ENCODE measurements at regions of chr2 and their contacts with region 1.

Region 1: DNA sequence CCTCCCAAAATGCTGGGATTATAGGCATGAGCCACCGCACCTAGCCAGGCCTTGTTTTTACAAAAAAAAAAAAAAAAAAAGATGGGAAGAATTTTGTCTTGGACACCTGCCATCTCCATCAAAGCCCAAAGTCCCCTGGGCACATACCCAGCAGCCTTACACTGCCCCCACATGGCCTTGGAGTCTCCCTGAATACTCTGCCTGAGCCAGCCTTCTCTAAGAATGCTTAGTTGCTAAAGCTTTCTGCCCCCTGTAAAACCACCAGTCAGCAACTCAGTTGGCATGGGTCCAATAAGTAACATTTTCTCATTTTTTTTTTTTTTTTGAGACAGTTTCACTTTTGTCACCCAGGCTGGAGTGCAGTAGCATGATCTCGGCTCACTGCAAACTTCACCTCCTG is 40.6 kb downstream of the SPC25 start:
- DNase-seq: peak; percentile 79 to 82
- H3K4me3 ChIP-seq: no peak overlapping the region
- H3K27ac ChIP-seq: peak overlapping the region; percentile 13 to 71 (median 24)
- H3K4me1 ChIP-seq: peaks cover 5 to 8% of the 10 kb centered on the region in 2 donors
- H3K27me3 ChIP-seq: no peaks in the 10 kb centered on the region
- CTCF ChIP-seq: peak in 4 of 6 experiments; percentile 61 to 76 (median 68)
- POLR2A ChIP-seq: no peak

Region 2: GRCh38 chr2:168814939-168815907 is 34.4 kb before region 1 on chr2:
- intact Hi-C with region 1: loop called (anchors 5 kb)
- DNase-seq: peak; percentile 68
- H3K4me3 ChIP-seq: no peak overlapping the region
- H3K27ac ChIP-seq: peak overlapping the region; percentile 80 to 92 (median 82)
- H3K4me1 ChIP-seq: peaks cover 46 to 59% of the 10 kb centered on the region in 2 donors
- H3K27me3 ChIP-seq: no peaks in the 10 kb centered on the region
- CTCF ChIP-seq: no peak
- POLR2A ChIP-seq: peak in 1 of 2 donors; percentile 41

Region 3: GRCh38 chr2:168907940-168908662 is 58.5 kb after region 1 on chr2:
- intact Hi-C with region 1: no loop called
- DNase-seq: no peak
- H3K4me3 ChIP-seq: no peak overlapping the region
- H3K27ac ChIP-seq: no peak overlapping the region
- H3K4me1 ChIP-seq: no peaks in the 10 kb centered on the region
- H3K27me3 ChIP-seq: no peaks in the 10 kb centered on the region
- CTCF ChIP-seq: no peak
- POLR2A ChIP-seq: no peak

Region 4: GRCh38 chr2:169095621-169096105 is 246.1 kb after region 1 on chr2:
- intact Hi-C with region 1: no loop called
- DNase-seq: no peak
- H3K4me3 ChIP-seq: no peak overlapping the region
- H3K27ac ChIP-seq: no peak overlapping the region
- H3K4me1 ChIP-seq: no peaks in the 10 kb centered on the region
- H3K27me3 ChIP-seq: no peaks in the 10 kb centered on the region
- CTCF ChIP-seq: no peak
- POLR2A ChIP-seq: no peak

Measured in thyroid gland (tissue), 4 donors.